Naive thymus-derived CD8-positive, alpha-beta T cell (primary cell): ENCODE measurements at regions of chr5 and their contacts with region 1.

Region 1: GRCh38 chr5:131209506-131210150 is 38.9 kb downstream of the LYRM7 start:
- DNase-seq: peak; percentile 8 to 90 (median 73)
- ATAC-seq: peak; percentile 90 to 94
- H3K4me3 Mint-ChIP-seq: peak overlapping the region; percentile 68 to 91 (median 82)
- H3K27ac Mint-ChIP-seq: peak overlapping the region; percentile 88 to 99 (median 96)
- H3K4me1 Mint-ChIP-seq: peaks cover 28 to 69% (median 59%) of the 10 kb centered on the region in 4 donors
- H3K27me3 Mint-ChIP-seq: no peaks in the 10 kb centered on the region

Region 2: GRCh38 chr5:131186561-131187256 is 22.9 kb before region 1 on chr5:
- POLR2A ChIA-PET with region 1: no interaction called
- DNase-seq: no peak
- ATAC-seq: no peak
- H3K4me3 Mint-ChIP-seq: no peak overlapping the region
- H3K27ac Mint-ChIP-seq: no peak overlapping the region
- H3K4me1 Mint-ChIP-seq: peaks cover 2 to 11% (median 7%) of the 10 kb centered on the region in 4 donors
- H3K27me3 Mint-ChIP-seq: no peaks in the 10 kb centered on the region

Region 3: DNA sequence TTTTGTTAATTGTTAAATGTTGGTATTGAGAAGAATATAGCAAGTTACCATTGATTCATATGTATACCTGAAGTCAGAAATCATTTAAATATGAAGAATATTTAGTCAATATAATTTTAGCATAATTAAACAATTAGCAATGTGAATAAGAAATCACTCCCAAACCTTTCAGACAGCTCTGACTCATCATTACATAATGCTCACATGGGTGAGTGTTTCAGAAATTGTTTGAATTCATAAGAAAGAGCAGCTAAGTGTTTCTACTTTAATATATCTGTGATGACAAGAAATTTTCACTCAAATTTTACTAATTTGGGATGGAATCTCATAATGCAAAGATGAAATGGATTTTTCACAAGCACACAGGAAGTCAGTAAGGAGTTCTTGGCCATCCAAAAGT is 12.3 kb after region 1 on chr5:
- POLR2A ChIA-PET with region 1: interaction called, 11 read pairs
- DNase-seq: no peak
- ATAC-seq: no peak
- H3K4me3 Mint-ChIP-seq: no peak overlapping the region
- H3K27ac Mint-ChIP-seq: no peak overlapping the region
- H3K4me1 Mint-ChIP-seq: peaks cover 1 to 18% (median 5%) of the 10 kb centered on the region in 4 donors
- H3K27me3 Mint-ChIP-seq: no peaks in the 10 kb centered on the region